HEK293T (cell line): ENCODE measurements at regions of chr9 and their contacts with region 1.

Region 1: DNA sequence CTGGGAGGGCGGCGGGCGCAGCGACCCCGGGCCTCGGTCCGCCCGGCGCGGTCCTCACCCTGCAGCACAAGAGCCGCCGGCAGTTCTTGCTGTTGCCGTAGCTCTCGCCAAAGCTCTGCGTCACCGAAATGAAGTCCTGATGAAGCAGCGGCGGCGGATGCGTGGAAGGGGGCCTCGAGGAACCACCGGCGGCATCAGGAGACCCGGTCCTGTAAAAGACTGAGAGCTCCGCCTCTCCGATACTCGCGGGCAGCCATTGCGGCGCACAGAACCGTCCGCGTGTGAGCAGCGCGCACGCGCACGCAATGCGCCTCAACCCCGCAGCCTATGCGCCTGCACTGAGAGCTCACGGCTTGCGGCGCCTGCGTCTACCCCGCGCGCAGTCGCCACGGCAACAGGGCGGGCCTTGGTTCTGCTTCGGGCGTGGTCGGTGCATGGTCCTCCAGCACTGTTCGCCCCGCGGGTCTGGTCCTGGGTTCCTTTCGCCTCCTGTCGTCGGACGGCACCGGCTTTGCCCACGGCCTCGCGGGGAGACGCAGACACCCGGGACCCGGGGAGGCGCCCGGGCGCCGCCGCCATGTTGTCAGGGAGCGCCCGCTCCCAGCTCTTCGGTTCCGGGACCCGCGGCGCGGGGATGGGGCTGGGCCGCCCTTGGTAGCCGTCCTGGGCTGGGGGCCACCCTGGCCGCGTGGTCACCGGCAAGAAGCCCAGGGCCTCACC is 9.3 kb upstream of the GRIN1 start:
- DNase-seq: peak; percentile 94

Region 2: DNA sequence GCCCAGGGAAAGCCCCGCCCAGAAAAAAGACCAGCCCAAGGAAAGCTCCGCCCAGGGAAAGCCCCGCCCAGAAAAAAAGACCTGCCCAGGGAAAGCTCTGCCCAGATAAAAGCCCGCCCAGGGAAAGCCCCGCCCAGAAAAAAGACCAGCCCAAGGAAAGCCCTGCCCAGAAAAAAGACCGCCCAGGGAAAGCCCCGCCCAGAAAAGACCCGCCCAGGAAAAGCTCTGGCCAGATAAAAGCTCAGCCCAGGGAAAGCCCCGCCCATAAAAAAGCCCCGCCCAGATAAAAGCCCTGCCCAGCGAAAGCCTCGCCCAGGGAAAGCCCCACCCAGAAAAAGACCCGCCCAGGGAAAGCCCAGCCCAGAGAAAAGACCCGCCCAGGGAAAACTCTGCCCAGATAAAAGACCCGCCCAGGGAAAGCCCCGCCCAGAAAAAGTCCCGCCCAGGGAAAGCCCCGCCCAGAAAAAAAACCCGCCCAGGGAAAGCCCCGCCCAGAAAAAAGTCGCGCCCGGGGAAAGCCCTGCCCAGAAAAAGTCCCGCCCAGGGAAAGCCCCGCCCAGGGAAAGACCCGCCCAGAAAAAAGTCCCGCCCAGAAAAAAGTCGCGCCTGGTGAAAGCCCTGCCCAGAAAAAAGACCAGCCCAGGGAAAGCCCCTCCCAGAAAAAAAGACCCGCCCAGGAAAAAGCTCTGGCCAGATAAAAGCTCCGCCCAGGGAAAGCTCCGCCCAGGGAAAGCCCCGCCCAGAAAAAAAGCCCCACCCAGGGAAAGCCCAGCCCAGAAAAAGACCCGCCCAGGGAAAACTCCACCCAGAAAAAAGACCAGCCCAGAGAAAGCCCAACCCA is 21.2 kb after region 1 on chr9:
- CTCF ChIA-PET with region 1: interaction called, 4 read pairs
- POLR2A ChIA-PET with region 1: interaction called, 57 read pairs
- DNase-seq: peak; percentile 83

Region 3: DNA sequence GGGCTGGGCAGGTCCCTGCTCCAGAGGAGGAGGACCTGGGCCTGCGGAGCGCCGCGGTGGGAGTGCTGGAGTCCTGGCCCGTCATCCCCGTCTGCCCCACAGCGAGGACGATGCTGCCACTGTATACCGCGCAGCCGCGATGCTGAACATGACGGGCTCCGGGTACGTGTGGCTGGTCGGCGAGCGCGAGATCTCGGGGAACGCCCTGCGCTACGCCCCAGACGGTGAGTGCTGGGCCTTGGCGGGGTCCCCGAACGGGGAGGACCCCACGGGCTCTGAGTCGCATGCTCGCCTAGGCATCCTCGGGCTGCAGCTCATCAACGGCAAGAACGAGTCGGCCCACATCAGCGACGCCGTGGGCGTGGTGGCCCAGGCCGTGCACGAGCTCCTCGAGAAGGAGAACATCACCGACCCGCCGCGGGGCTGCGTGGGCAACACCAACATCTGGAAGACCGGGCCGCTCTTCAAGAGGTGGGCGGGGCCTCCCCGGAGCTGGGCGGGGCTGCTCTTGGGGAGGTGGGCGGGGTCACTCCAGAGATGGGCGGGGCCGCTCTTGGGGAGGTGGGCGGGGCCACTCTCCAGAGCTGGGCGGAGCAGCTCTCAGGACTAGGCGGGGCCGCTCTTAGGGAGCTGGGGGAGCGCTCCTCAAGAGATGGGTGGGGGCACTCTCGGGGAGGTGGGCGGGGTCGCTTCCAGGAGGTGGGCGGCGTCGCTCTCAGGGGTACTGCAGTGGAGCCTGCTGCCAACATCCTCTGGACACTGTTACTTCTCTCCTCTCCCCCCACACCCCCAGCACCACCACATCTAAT is 27.2 kb after region 1 on chr9:
- CTCF ChIA-PET with region 1: no interaction called
- POLR2A ChIA-PET with region 1: interaction called, 21 read pairs
- DNase-seq: peak; percentile 82

Region 4: DNA sequence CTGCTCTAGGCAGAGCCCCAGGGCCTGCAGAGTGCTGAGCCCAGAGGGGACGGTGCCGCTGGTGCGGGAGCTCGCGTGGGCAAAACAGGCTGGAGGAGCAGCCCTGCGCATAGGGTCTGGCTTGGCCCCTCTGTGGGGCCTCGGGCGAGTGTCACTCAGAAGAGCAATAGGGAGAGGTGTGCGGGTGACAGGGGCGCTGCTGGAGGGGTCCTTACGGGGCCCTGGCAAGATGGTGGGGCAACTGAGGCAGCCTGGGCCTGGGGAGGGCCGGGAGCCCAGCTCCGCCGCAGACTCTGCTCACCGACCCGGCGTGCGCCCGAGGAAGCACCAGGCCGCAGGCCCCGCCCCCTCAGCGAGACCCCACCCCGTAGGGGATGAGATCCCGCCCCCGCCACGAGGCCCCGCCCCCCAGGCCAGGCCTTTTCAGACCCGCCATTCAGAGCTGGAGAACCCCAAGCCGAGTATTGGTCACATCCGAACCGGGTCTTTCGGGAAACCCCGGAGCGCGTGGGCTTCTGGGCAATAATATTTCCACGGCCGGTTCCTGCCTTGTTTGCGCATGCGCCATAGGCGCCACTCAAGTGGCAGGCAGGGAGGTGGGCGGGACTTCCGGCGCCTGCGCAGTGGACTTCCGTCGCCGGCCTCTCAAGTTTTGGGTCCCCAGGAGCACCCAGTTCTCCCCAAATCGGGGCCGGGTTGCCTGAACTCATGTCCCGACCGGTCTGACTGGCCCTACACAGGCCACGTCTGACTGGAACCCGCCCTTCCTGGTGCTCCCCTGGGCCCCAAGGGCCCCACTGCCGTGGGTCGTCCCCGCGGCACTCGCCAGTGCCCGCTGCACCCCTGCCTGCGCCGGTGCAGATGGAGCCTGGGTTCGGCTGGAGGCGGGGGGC is 93.7 kb after region 1 on chr9:
- CTCF ChIA-PET with region 1: interaction called, 4 read pairs
- POLR2A ChIA-PET with region 1: interaction called, 20 read pairs
- DNase-seq: peak; percentile 95